Naive thymus-derived CD4-positive, alpha-beta T cell (primary cell): ENCODE measurements at regions of chr11 and their contacts with region 1.

Region 1: DNA sequence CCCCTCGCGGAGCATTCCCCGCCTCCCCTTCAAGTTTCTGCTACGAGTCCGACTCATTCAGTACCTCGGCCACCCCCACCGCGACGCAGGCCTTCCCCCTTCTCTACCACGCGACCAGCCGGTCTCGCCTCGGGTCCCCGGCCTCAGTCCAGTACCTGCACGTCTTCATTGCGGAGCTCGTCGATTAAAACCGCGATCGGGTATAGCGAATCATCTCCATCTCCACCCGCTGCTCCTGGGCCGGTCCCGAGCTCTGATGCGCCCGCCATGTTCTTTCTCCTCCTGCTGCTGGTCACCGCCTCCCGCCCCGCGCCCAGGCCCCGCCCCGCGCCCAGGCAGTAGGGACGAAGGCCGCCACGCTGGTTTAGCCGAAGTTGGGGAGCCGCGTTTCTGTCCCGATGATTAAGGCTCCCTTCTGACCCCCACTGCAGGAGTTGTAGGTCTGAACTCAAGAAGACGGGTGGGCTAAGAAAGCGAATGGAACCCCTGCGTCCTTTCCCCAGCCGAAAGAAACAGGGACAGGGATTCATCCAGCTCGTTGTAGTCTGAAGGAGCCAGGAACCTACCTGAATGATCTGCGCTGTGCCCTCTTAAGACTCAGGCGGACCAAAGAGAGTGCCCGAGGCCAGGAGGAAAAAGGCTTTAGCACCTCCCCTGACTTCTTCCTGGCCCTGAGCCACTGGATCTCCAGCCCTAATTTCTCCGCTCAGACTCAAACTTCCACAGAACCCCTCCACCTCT is at the start of gene PPP2R1B:
- DNase-seq: peak; percentile 50 to 78 (median 69)
- ATAC-seq: peak; percentile 98
- H3K4me3 ChIP-seq: peak within 1 kb of the TSS; percentile 95
- H3K4me3 Mint-ChIP-seq: peak within 1 kb of the TSS; percentile 94 to 100 (median 98)
- H3K27ac ChIP-seq: peak within 1 kb of the TSS; percentile 86
- H3K27ac Mint-ChIP-seq: peak within 1 kb of the TSS; percentile 83 to 99 (median 95)
- H3K4me1 ChIP-seq: peaks cover 7% of the 10 kb centered on the region in 2 donors
- H3K4me1 Mint-ChIP-seq: peaks cover 25 to 48% (median 38%) of the 10 kb centered on the region in 7 donors
- H3K27me3 ChIP-seq: no peaks in the 10 kb centered on the region
- H3K27me3 Mint-ChIP-seq: no peaks in the 10 kb centered on the region
- total RNA-seq, gene PPP2R1B: 25.8 to 49.2 (median 34.0) TPM

Region 2: GRCh38 chr11:111378861-111379601 is 387.2 kb before region 1 on chr11 and contains the start of gene POU2AF1:
- CTCF ChIA-PET with region 1: no interaction called
- POLR2A ChIA-PET with region 1: no interaction called
- intact Hi-C with region 1: loop called (anchors 1 to 10 kb)
- DNase-seq: peak; percentile 36 to 87 (median 83)
- ATAC-seq: peak; percentile 91
- H3K4me3 ChIP-seq: peak within 1 kb of the TSS; percentile 39
- H3K4me3 Mint-ChIP-seq: peak within 1 kb of the TSS; percentile 73 to 89 (median 84)
- H3K27ac ChIP-seq: peak within 1 kb of the TSS; percentile 58
- H3K27ac Mint-ChIP-seq: peak within 1 kb of the TSS; percentile 85 to 99 (median 95)
- H3K4me1 ChIP-seq: peaks cover 0 to 19% of the 10 kb centered on the region in 2 donors
- H3K4me1 Mint-ChIP-seq: peaks cover 7 to 50% (median 42%) of the 10 kb centered on the region in 7 donors
- H3K27me3 ChIP-seq: no peaks in the 10 kb centered on the region
- H3K27me3 Mint-ChIP-seq: peaks cover 0 to 3% (median 0%) of the 10 kb centered on the region in 5 donors
- total RNA-seq, gene POU2AF1: 0.57 to 11.3 (median 4.9) TPM

Region 3: DNA sequence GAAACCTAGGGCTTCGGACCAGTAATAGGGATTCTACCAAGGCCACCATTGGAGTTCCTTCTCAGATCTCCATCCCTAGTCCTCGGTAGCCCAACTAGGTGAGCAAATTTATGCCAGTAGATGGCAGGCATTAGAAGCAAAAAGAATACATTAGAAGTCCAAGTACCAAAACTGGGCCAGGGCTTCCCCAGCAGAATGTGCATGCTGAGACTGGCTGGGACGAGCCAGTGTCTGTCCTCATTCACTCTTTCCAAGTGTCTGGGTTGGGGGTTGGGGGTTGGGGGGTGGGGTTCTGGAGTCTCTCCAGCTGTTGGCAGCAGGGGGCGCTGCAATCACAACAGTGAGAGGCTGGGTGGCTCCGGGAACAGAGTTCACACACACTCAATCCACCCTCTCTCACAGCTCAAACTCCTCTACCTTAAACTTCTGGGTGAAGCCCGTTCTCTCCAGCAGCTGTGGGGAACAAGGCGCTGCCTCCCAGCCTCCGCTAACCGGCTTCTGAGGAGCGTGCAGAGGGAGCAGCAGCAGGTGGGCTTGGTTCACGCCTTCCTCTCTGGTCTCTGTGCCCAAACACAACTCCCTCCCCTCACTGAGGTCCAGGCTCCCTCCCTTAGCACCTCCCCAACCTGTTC is 311.6 kb before region 1 on chr11:
- CTCF ChIA-PET with region 1: no interaction called
- POLR2A ChIA-PET with region 1: no interaction called
- intact Hi-C with region 1: no loop called
- DNase-seq: peak in 3 of 9 donors; percentile 14 to 64 (median 23)
- ATAC-seq: no peak
- H3K4me3 ChIP-seq: no peak overlapping the region
- H3K4me3 Mint-ChIP-seq: no peak overlapping the region
- H3K27ac ChIP-seq: no peak overlapping the region
- H3K27ac Mint-ChIP-seq: no peak overlapping the region
- H3K4me1 ChIP-seq: no peaks in the 10 kb centered on the region
- H3K4me1 Mint-ChIP-seq: peaks cover 0 to 3% (median 0%) of the 10 kb centered on the region in 7 donors
- H3K27me3 ChIP-seq: no peaks in the 10 kb centered on the region
- H3K27me3 Mint-ChIP-seq: peaks cover 0 to 17% (median 8%) of the 10 kb centered on the region in 5 donors

Region 4: DNA sequence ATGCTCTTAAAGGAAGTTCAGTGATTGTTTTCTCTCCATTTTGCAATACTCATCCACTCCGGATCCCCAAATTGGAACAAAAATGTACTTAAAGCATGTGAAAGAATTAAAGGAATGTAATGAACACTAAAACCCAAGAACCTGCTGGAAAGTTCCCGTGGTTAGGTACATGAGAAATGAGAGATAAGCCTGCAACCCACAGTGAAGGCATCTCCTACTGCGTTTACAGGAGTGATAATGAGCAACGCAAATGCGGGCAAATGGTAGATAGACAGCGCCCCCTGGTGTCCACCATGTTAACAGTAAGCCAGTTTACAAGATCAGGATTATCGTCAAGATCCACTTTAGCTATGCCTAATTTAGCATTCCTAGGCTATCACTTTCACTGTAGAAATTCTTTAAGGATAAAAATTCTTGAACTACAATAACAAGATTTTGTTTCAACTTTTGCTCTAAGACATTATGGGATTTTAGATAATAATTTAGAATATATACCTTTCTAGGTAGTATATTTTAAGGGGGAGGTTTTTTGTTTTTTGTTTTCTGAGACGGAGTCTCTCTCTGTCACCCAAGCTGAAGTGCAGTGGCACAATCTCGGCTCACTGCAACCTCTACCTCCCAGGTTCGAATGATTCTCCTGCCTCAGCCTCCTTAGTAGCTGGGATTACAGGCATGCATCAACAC is 75.2 kb after region 1 on chr11:
- CTCF ChIA-PET with region 1: no interaction called
- POLR2A ChIA-PET with region 1: no interaction called
- intact Hi-C with region 1: loop called in 1 of 2 experiments (anchors 5 kb)
- DNase-seq: peak; percentile 56 to 80 (median 76)
- ATAC-seq: peak; percentile 93
- H3K4me3 ChIP-seq: no peak overlapping the region
- H3K4me3 Mint-ChIP-seq: no peak overlapping the region
- H3K27ac ChIP-seq: no peak overlapping the region
- H3K27ac Mint-ChIP-seq: peak overlapping the region in 2 of 9 donors; percentile 14 to 59
- H3K4me1 ChIP-seq: no peaks in the 10 kb centered on the region
- H3K4me1 Mint-ChIP-seq: peaks cover 0 to 14% (median 4%) of the 10 kb centered on the region in 7 donors
- H3K27me3 ChIP-seq: no peaks in the 10 kb centered on the region
- H3K27me3 Mint-ChIP-seq: no peaks in the 10 kb centered on the region

Region 5: GRCh38 chr11:111926505-111927391 is 160.5 kb after region 1 on chr11:
- CTCF ChIA-PET with region 1: no interaction called
- POLR2A ChIA-PET with region 1: interaction called, 4 read pairs
- intact Hi-C with region 1: loop called in 1 of 2 experiments (anchors 1 kb)
- DNase-seq: peak; percentile 91 to 98 (median 96)
- ATAC-seq: peak; percentile 96
- H3K4me3 ChIP-seq: peak overlapping the region; percentile 61
- H3K4me3 Mint-ChIP-seq: peak overlapping the region; percentile 76 to 91 (median 87)
- H3K27ac ChIP-seq: peak overlapping the region; percentile 76
- H3K27ac Mint-ChIP-seq: peak overlapping the region; percentile 83 to 96 (median 92)
- H3K4me1 ChIP-seq: peaks cover 0 to 5% of the 10 kb centered on the region in 2 donors
- H3K4me1 Mint-ChIP-seq: peaks cover 0 to 19% (median 16%) of the 10 kb centered on the region in 7 donors
- H3K27me3 ChIP-seq: no peaks in the 10 kb centered on the region
- H3K27me3 Mint-ChIP-seq: peaks cover 0 to 5% (median 0%) of the 10 kb centered on the region in 5 donors

Region 6: DNA sequence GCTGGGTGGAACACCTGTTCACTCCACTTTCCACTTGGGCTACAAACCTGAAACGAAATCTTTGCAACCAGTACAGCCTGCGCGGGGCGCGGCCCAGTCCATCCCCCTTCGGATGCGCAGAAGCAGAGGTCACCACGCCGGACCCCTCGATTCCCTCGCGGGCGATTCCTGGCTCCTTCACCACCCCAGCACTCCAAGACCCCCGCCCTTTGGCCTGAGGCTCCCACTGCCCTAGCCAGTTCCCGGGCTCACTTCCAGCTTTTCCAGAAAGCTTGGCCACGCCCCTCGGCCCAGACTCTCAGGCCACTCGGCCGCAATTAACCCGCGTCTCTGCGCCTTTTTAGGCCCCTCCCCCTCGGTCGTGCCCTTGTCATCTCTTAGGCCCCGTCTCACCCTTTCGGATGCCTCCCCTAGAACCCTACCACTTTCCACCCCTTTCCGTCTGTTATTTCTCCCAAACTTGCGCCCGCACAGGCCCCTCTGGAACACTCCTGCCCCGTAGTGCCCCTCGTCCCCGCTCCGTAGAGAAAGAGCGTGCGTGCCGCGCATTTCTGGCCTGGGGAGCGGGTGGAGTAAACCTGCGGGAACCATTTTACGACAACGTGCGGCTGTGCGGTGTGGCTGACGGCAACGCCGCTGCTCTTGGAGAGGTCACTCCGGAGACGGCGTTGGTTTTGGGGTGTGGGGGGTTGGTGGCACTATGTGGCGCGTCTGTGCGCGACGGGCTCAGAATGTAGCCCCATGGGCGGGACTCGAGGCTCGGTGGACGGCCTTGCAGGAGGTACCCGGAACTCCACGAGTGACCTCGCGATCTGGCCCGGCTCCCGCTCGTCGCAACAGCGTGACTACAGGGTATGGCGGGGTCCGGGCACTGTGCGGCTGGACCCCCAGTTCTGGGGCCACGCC is 258.8 kb after region 1 on chr11 and contains the start of gene DLAT:
- CTCF ChIA-PET with region 1: no interaction called
- POLR2A ChIA-PET with region 1: no interaction called
- intact Hi-C with region 1: loop called in 1 of 2 experiments (anchors 5 kb)
- DNase-seq: peak; percentile 66 to 87 (median 85)
- ATAC-seq: peak; percentile 95
- H3K4me3 ChIP-seq: peak within 1 kb of the TSS; percentile 100
- H3K4me3 Mint-ChIP-seq: peak within 1 kb of the TSS; percentile 97 to 100 (median 99)
- H3K27ac ChIP-seq: peak within 1 kb of the TSS; percentile 93
- H3K27ac Mint-ChIP-seq: peak within 1 kb of the TSS; percentile 96 to 100 (median 98)
- H3K4me1 ChIP-seq: peaks cover 0 to 7% of the 10 kb centered on the region in 2 donors
- H3K4me1 Mint-ChIP-seq: peaks cover 14 to 39% (median 30%) of the 10 kb centered on the region in 7 donors
- H3K27me3 ChIP-seq: no peaks in the 10 kb centered on the region
- H3K27me3 Mint-ChIP-seq: no peaks in the 10 kb centered on the region
- total RNA-seq, gene DLAT: 13.1 to 31.0 (median 17.8) TPM

Region 7: DNA sequence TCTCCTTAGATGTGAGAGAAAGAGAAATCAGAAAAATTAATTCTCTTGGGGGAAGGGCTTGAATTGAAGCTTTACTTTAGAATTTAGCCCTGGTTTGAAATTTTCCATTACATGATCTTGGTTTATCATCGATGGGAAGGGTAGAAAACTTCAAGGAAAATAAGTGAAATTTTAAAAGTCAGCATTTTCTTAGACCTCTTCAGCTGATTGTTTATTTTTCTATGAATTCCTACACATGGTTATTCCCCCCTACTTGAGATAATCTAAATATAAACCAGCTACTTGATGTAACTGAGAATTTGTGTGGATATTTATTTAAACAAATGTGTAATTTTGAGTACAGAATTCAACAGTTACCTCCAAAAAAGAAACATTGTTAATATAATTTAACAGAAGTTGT is 296.7 kb after region 1 on chr11:
- CTCF ChIA-PET with region 1: no interaction called
- POLR2A ChIA-PET with region 1: no interaction called
- intact Hi-C with region 1: no loop called
- DNase-seq: no peak
- ATAC-seq: no peak
- H3K4me3 ChIP-seq: no peak overlapping the region
- H3K4me3 Mint-ChIP-seq: no peak overlapping the region
- H3K27ac ChIP-seq: no peak overlapping the region
- H3K27ac Mint-ChIP-seq: no peak overlapping the region
- H3K4me1 ChIP-seq: no peaks in the 10 kb centered on the region
- H3K4me1 Mint-ChIP-seq: peaks cover 0 to 1% (median 0%) of the 10 kb centered on the region in 7 donors
- H3K27me3 ChIP-seq: no peaks in the 10 kb centered on the region
- H3K27me3 Mint-ChIP-seq: no peaks in the 10 kb centered on the region